ENCODE measurements at regions of chr6 and their contacts with region 1.

Region 1: GRCh38 chr6:2791124-2791974 is 26.2 kb downstream of the WRNIP1 start:
- DNase-seq: peak; percentile 83
- ATAC-seq: peak; percentile 76
- H3K4me3 Mint-ChIP-seq: no peak overlapping the region
- H3K27ac Mint-ChIP-seq: peak overlapping the region; percentile 71
- H3K4me1 Mint-ChIP-seq: peaks cover 44% of the 10 kb centered on the region
- H3K27me3 Mint-ChIP-seq: no peaks in the 10 kb centered on the region

Region 2: DNA sequence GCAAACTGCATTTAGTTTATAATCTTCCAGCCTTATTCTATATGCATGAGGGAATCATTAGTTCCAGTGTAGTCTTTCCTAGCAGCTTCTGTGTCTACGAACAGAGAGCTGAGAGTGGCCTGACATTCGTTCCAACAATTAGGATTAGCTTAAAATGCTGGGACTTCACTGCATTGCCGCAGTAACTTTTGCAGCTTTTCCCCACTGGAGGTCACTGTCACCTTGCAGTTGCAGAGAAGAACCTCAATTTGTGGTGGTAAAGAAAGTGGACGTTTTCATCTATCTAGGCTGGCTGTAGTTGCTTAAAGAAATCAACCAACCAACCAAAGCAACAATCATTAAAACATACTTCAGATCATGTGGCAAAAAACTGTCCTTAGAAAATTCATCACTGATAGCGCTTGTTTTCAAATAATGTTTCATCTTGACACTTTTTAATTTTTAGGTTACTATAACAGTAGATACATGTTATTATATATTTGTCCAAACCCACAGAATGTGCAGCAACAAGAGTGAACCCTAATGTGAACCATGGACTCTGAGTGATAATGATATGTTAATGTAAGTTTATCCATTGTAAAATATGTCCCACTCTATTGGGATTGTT is 52.9 kb before region 1 on chr6:
- CTCF ChIA-PET with region 1: no interaction called
- POLR2A ChIA-PET with region 1: no interaction called
- intact Hi-C with region 1: loop called in 1 of 2 experiments (anchors 1 kb)
- DNase-seq: peak; percentile 70
- ATAC-seq: peak; percentile 62
- H3K4me3 Mint-ChIP-seq: no peak overlapping the region
- H3K27ac Mint-ChIP-seq: no peak overlapping the region
- H3K4me1 Mint-ChIP-seq: peaks cover 5% of the 10 kb centered on the region
- H3K27me3 Mint-ChIP-seq: no peaks in the 10 kb centered on the region

Region 3: GRCh38 chr6:2841264-2842138 is 50.2 kb after region 1 on chr6 and contains the start of gene SERPINB1:
- CTCF ChIA-PET with region 1: interaction called, 49 read pairs
- POLR2A ChIA-PET with region 1: interaction called, 10 read pairs
- intact Hi-C with region 1: loop called (anchors 1 kb)
- DNase-seq: peak; percentile 96
- ATAC-seq: peak; percentile 86
- H3K4me3 Mint-ChIP-seq: peak within 1 kb of the TSS; percentile 96
- H3K27ac Mint-ChIP-seq: peak within 1 kb of the TSS; percentile 91
- H3K4me1 Mint-ChIP-seq: peaks cover 67% of the 10 kb centered on the region
- H3K27me3 Mint-ChIP-seq: no peaks in the 10 kb centered on the region
- total RNA-seq, gene SERPINB1: 200 to 243 TPM

Region 4: GRCh38 chr6:2870056-2870674 is 78.8 kb after region 1 on chr6:
- CTCF ChIA-PET with region 1: interaction called, 11 read pairs
- POLR2A ChIA-PET with region 1: interaction called, 6 read pairs
- intact Hi-C with region 1: no loop called
- DNase-seq: no peak
- ATAC-seq: no peak
- H3K4me3 Mint-ChIP-seq: no peak overlapping the region
- H3K27ac Mint-ChIP-seq: no peak overlapping the region
- H3K4me1 Mint-ChIP-seq: peaks cover 69% of the 10 kb centered on the region
- H3K27me3 Mint-ChIP-seq: no peaks in the 10 kb centered on the region

Region 5: GRCh38 chr6:2911171-2911570 is 119.8 kb after region 1 on chr6:
- CTCF ChIA-PET with region 1: interaction called, 12 read pairs
- POLR2A ChIA-PET with region 1: no interaction called
- intact Hi-C with region 1: loop called (anchors 1 to 5 kb)
- DNase-seq: no peak
- ATAC-seq: no peak
- H3K4me3 Mint-ChIP-seq: no peak overlapping the region
- H3K27ac Mint-ChIP-seq: peak overlapping the region; percentile 52
- H3K4me1 Mint-ChIP-seq: peaks cover 45% of the 10 kb centered on the region
- H3K27me3 Mint-ChIP-seq: peaks cover 2% of the 10 kb centered on the region

Region 6: DNA sequence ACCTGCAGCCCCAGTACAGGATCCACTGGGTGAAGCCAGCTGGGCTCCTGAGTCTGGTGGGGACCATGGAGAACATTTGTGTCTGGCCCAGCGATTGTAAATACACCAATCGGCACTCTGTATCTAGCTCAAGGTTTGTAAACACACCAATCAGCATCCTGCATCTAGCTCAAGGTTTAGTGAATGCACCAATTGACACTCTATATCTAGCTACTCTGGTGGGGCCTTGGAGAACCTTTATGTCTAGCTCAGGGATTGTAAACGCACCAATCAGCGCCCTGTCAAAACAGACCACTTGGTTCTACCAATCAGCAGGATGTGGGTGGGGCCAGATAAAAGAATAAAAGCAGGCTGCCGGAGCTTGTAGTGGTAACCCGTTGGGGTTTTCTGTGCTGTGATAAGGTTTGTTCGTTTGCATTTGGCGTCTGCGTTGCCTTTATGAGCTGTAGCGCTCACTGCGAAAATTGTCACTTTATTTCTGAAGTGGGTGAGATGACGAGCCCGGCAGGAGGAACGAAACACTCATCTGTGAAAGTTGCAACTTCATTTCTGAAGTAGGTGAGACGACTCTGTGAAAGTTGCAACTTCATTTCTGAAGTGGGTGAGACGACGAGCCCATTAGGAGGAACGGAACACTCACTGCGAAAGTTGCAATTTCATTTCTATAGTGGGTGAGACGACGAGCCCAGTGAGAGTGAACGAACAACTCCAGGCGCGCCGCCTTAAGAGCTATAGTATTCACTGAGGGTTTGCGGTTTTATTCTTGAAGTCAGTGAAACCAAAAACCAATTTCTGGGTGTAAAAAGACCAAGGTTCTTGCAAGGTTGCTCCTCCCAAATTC is 148.9 kb after region 1 on chr6:
- CTCF ChIA-PET with region 1: interaction called, 63 read pairs
- POLR2A ChIA-PET with region 1: interaction called, 11 read pairs
- intact Hi-C with region 1: no loop called
- DNase-seq: peak; percentile 92
- ATAC-seq: peak; percentile 84
- H3K4me3 Mint-ChIP-seq: peak overlapping the region; percentile 50
- H3K27ac Mint-ChIP-seq: peak overlapping the region; percentile 94
- H3K4me1 Mint-ChIP-seq: peaks cover 67% of the 10 kb centered on the region
- H3K27me3 Mint-ChIP-seq: no peaks in the 10 kb centered on the region

Region 7: DNA sequence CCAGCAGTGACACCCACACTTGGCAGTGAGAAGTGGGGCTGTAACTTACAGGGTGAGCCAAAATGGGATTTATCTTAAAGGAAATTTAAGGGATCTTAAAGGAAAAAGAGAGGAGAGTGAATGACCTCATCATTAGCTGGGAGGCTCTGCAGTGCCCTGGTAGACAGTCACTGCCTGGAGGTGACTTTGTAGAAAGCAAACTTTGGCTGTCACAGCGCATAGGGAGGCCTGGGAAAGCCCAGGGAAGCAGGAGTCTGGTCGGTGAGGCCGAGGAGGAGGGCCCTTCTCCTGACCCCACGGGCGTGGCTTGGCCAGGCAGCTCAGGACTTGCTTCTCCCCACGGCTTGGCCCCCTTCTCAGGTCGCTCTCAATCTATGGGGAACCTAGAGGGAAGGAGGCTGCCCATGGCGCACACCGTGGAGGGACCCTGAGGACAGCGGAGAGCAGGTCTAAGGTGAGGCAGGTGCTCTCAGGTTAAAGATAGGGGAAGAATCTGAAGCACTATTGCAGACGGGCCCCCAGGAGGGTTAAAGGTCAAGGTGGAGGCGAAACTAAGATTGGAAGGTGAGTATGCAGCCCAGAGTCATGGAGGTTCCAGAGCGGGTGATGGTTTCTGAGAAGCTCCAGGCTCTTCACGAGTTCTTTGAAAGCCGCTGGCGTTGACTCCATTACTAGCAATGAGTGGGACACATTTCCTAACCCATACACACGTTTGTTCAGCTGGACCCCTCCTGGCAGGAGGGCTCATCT is 261.3 kb after region 1 on chr6:
- CTCF ChIA-PET with region 1: interaction called, 5 read pairs
- POLR2A ChIA-PET with region 1: no interaction called
- intact Hi-C with region 1: loop called (anchors 2 to 5 kb)
- DNase-seq: no peak
- ATAC-seq: no peak
- H3K4me3 Mint-ChIP-seq: peak overlapping the region; percentile 69
- H3K27ac Mint-ChIP-seq: no peak overlapping the region
- H3K4me1 Mint-ChIP-seq: peaks cover 15% of the 10 kb centered on the region
- H3K27me3 Mint-ChIP-seq: no peaks in the 10 kb centered on the region